CD4-positive, alpha-beta memory T cell (primary cell): ENCODE measurements at regions of chr12 and their contacts with region 1.

Region 1: DNA sequence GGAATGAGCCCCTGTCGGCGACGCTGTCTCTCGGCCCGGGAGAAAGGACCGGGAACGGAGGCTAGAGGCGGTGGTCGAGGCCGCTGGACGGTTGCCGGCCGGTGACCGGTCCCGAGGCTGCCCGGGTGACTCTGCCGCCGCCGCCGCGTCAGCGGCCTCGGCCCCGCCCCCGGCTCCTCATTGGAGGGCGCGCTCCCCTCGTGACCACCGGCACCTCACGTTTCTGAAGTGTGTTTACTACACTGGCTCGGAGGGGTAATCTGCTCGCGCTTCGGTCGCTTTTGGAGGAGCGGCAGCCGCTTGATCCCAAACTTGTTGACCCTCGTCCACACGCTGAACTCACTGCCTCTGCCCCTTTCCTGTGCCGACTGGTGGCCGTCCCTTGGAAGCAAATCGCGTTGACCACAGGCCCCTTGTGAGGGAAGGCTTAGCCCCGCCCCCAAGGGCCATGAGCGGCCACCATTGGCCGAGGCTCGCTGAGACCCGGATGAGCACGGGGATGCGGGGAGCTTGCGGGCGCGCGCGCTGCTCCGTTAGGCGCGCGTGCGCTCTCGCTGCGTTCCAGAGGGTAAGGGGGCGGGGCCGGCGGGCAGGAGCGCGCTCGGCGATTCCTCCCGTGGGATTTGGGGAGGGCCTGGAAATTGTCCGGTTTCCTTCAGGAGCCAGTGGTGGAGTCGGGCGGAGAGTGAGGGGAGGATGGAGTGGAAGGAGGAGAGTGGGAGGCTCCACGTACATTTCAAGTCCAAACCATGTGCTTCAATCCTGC is at the start of gene CRY1:
- DNase-seq: peak; percentile 92 to 97 (median 94)
- H3K4me3 ChIP-seq: peak within 1 kb of the TSS; percentile 94 to 98
- H3K4me3 Mint-ChIP-seq: no peak within 1 kb of the TSS
- H3K27ac ChIP-seq: peak within 1 kb of the TSS; percentile 99
- H3K27ac Mint-ChIP-seq: no peak within 1 kb of the TSS
- H3K4me1 ChIP-seq: peaks cover 26% of the 10 kb centered on the region
- H3K4me1 Mint-ChIP-seq: peaks cover under 1 to 19% (median 11%) of the 10 kb centered on the region in 4 donors
- H3K27me3 ChIP-seq: no peaks in the 10 kb centered on the region
- H3K27me3 Mint-ChIP-seq: peaks cover 0 to 4% of the 10 kb centered on the region in 2 donors
- total RNA-seq, gene CRY1: 31.1 to 32.2 TPM

Region 2: DNA sequence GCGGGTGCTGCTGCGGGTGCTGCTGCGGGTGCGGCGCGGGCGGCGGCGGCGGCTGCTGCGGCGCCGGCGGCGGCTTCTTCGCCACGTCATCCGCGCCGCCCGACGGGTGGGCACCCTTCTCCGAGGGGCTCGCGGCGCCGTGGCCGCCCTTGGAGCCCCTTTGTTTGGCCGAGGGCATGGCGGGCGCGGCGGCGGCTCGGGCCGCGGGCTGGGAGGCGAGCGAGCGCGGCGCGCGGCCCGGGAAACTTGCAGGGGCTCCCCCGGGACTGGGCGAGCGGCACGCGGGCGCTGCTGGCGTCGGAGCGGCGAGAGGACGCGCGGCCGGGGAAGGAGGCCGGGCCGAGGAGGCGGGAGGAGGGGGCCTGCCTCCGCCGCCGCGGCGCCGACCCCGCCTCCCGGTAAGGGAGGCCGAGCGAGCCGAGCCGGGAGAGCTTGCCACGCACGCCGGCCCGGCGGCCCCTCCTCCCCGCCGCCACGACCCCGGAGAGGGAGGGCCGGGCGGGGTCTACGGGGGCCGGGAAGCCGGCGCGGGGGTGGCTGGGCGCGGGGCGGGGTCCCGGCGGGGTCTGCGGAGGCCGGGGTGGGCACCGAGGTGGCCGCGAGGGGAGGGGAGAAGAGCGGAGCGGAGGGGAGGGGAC is 845.8 kb before region 1 on chr12 and contains the start of gene CKAP4:
- CTCF ChIA-PET with region 1: no interaction called
- POLR2A ChIA-PET with region 1: no interaction called
- intact Hi-C with region 1: loop called (anchors 10 kb)
- DNase-seq: peak; percentile 56 to 65 (median 64)
- H3K4me3 ChIP-seq: peak within 1 kb of the TSS; percentile 32 to 54
- H3K4me3 Mint-ChIP-seq: peak within 1 kb of the TSS; percentile 83 to 90 (median 87)
- H3K27ac ChIP-seq: peak within 1 kb of the TSS; percentile 74
- H3K27ac Mint-ChIP-seq: peak within 1 kb of the TSS; percentile 80 to 98 (median 96)
- H3K4me1 ChIP-seq: peaks cover 34% of the 10 kb centered on the region
- H3K4me1 Mint-ChIP-seq: peaks cover 9 to 43% (median 30%) of the 10 kb centered on the region in 4 donors
- H3K27me3 ChIP-seq: no peaks in the 10 kb centered on the region
- H3K27me3 Mint-ChIP-seq: no peaks in the 10 kb centered on the region
- total RNA-seq, gene CKAP4: 12.5 to 13.0 TPM

Region 3: GRCh38 chr12:106955377-106956047 is 138.1 kb before region 1 on chr12 and contains the start of gene TMEM263:
- CTCF ChIA-PET with region 1: interaction called, 4 read pairs
- POLR2A ChIA-PET with region 1: interaction called, 33 read pairs
- intact Hi-C with region 1: loop called (anchors 1 kb)
- DNase-seq: peak; percentile 89 to 91 (median 90)
- H3K4me3 ChIP-seq: peak within 1 kb of the TSS; percentile 74 to 92
- H3K4me3 Mint-ChIP-seq: peak within 1 kb of the TSS; percentile 92 to 98 (median 96)
- H3K27ac ChIP-seq: peak within 1 kb of the TSS; percentile 76
- H3K27ac Mint-ChIP-seq: peak within 1 kb of the TSS; percentile 93 to 99 (median 96)
- H3K4me1 ChIP-seq: peaks cover 17% of the 10 kb centered on the region
- H3K4me1 Mint-ChIP-seq: peaks cover 20 to 48% (median 25%) of the 10 kb centered on the region in 4 donors
- H3K27me3 ChIP-seq: no peaks in the 10 kb centered on the region
- H3K27me3 Mint-ChIP-seq: no peaks in the 10 kb centered on the region
- total RNA-seq, gene TMEM263: 31.2 to 32.9 TPM

Region 4: DNA sequence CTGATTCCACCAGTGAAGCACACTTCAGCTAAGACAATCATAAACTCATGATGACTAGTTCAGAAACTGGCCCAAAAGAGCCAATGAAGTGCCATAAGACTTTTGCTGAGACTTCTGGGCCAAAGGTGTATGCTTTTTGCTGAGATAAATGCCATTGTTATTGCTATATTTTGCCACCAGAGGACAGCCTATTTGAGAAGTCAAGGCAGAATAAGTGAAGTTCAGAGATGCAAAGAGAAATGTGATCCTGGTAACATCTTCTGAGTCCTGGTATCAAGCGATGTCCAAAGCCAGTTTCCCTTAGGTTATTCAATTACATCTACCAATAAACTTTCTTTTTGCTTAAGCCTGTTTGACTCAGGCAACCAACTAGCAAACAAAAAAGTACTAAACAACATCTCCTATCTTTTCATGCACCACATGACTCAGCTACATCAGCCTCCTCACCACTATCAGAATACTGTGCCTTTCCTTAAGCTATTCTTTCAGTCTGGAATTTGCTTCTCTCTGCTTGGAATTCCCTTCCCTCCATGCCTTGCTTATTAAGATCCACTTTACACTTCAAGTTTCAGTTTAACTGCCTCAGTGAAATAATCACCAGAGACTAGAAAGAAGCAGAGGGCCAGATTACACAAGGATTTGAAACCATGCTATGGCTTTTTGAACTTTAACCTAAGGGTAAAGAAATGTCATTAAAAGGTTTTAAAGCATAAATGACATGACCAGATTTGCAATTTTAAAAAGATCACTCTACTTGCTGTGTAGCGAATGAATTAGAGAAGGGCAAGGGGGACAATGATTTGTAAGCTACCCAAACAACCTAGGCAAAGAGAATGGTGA is 14.2 kb before region 1 on chr12:
- CTCF ChIA-PET with region 1: interaction called, 25 read pairs
- POLR2A ChIA-PET with region 1: no interaction called
- intact Hi-C with region 1: no loop called
- DNase-seq: peak in 4 of 5 donors; percentile 27 to 35 (median 29)
- H3K4me3 ChIP-seq: no peak overlapping the region
- H3K4me3 Mint-ChIP-seq: no peak overlapping the region
- H3K27ac ChIP-seq: no peak overlapping the region
- H3K27ac Mint-ChIP-seq: no peak overlapping the region
- H3K4me1 ChIP-seq: peaks cover 18% of the 10 kb centered on the region
- H3K4me1 Mint-ChIP-seq: peaks cover 11 to 17% (median 13%) of the 10 kb centered on the region in 4 donors
- H3K27me3 ChIP-seq: no peaks in the 10 kb centered on the region
- H3K27me3 Mint-ChIP-seq: no peaks in the 10 kb centered on the region

Region 5: GRCh38 chr12:107372229-107372658 is 278.6 kb after region 1 on chr12:
- CTCF ChIA-PET with region 1: no interaction called
- POLR2A ChIA-PET with region 1: interaction called, 4 read pairs
- intact Hi-C with region 1: loop called (anchors 5 kb)
- DNase-seq: peak; percentile 64 to 78 (median 70)
- H3K4me3 ChIP-seq: peak overlapping the region; percentile 25 to 27
- H3K4me3 Mint-ChIP-seq: peak overlapping the region; percentile 57 to 89 (median 78)
- H3K27ac ChIP-seq: peak overlapping the region; percentile 62
- H3K27ac Mint-ChIP-seq: peak overlapping the region; percentile 88 to 94 (median 91)
- H3K4me1 ChIP-seq: peaks cover 77% of the 10 kb centered on the region
- H3K4me1 Mint-ChIP-seq: peaks cover 60 to 90% (median 77%) of the 10 kb centered on the region in 4 donors
- H3K27me3 ChIP-seq: no peaks in the 10 kb centered on the region
- H3K27me3 Mint-ChIP-seq: no peaks in the 10 kb centered on the region

Region 6: GRCh38 chr12:107685360-107686248 is 592.0 kb after region 1 on chr12 and contains the start of gene PWP1:
- CTCF ChIA-PET with region 1: no interaction called
- POLR2A ChIA-PET with region 1: no interaction called
- intact Hi-C with region 1: loop called (anchors 5 kb)
- DNase-seq: peak; percentile 94 to 97 (median 95)
- H3K4me3 ChIP-seq: peak within 1 kb of the TSS; percentile 94 to 98
- H3K4me3 Mint-ChIP-seq: peak within 1 kb of the TSS; percentile 96 to 99 (median 97)
- H3K27ac ChIP-seq: peak within 1 kb of the TSS; percentile 78
- H3K27ac Mint-ChIP-seq: peak within 1 kb of the TSS; percentile 94 to 100 (median 98)
- H3K4me1 ChIP-seq: peaks cover 25% of the 10 kb centered on the region
- H3K4me1 Mint-ChIP-seq: peaks cover 14 to 37% (median 26%) of the 10 kb centered on the region in 4 donors
- H3K27me3 ChIP-seq: no peaks in the 10 kb centered on the region
- H3K27me3 Mint-ChIP-seq: no peaks in the 10 kb centered on the region
- total RNA-seq, gene PWP1: 24.3 to 25.6 TPM